Natural killer cell (primary cell): ENCODE measurements at regions of chr10 and their contacts with region 1.

Region 1: GRCh38 chr10:6678211-6678803 is 98.2 kb upstream of the PRKCQ start:
- DNase-seq: peak; percentile 44 to 84
- ATAC-seq: peak; percentile 56 to 69 (median 67)
- H3K4me3 ChIP-seq: no peak overlapping the region
- H3K4me3 Mint-ChIP-seq: no peak overlapping the region
- H3K27ac ChIP-seq: no peak overlapping the region
- H3K27ac Mint-ChIP-seq: no peak overlapping the region
- H3K4me1 ChIP-seq: no peaks in the 10 kb centered on the region
- H3K4me1 Mint-ChIP-seq: peaks cover 4 to 5% of the 10 kb centered on the region in 2 donors
- H3K27me3 ChIP-seq: peaks cover 4% of the 10 kb centered on the region
- H3K27me3 Mint-ChIP-seq: peaks cover 19 to 52% of the 10 kb centered on the region in 2 donors
- CTCF ChIP-seq: peak; percentile 78

Region 2: GRCh38 chr10:6416892-6417512 is 261.3 kb before region 1 on chr10:
- intact Hi-C with region 1: loop called (anchors 1 kb)
- DNase-seq: peak in 1 of 2 donors; percentile 79
- ATAC-seq: peak; percentile 56 to 80 (median 72)
- H3K4me3 ChIP-seq: no peak overlapping the region
- H3K4me3 Mint-ChIP-seq: no peak overlapping the region
- H3K27ac ChIP-seq: no peak overlapping the region
- H3K27ac Mint-ChIP-seq: no peak overlapping the region
- H3K4me1 ChIP-seq: no peaks in the 10 kb centered on the region
- H3K4me1 Mint-ChIP-seq: no peaks in the 10 kb centered on the region
- H3K27me3 ChIP-seq: no peaks in the 10 kb centered on the region
- H3K27me3 Mint-ChIP-seq: no peaks in the 10 kb centered on the region
- CTCF ChIP-seq: peak; percentile 69

Region 3: GRCh38 chr10:6647811-6648526 is 30.3 kb before region 1 on chr10:
- intact Hi-C with region 1: loop called (anchors 1 kb)
- DNase-seq: peak; percentile 45 to 86
- ATAC-seq: peak; percentile 88 to 95 (median 93)
- H3K4me3 ChIP-seq: no peak overlapping the region
- H3K4me3 Mint-ChIP-seq: no peak overlapping the region
- H3K27ac ChIP-seq: no peak overlapping the region
- H3K27ac Mint-ChIP-seq: peak overlapping the region; percentile 33 to 51
- H3K4me1 ChIP-seq: peaks cover 7% of the 10 kb centered on the region
- H3K4me1 Mint-ChIP-seq: peaks cover 17 to 18% of the 10 kb centered on the region in 2 donors
- H3K27me3 ChIP-seq: no peaks in the 10 kb centered on the region
- H3K27me3 Mint-ChIP-seq: peaks cover 0 to under 1% of the 10 kb centered on the region in 2 donors
- CTCF ChIP-seq: peak; percentile 94